PC-9 (cell line): ENCODE measurements at regions of chr2 and their contacts with region 1.

Region 1: GRCh38 chr2:174300089-174300488 is 34.7 kb upstream of the SP9 start:
- DNase-seq: no peak
- H3K4me3 ChIP-seq: no peak overlapping the region
- H3K27ac ChIP-seq: no peak overlapping the region
- H3K4me1 ChIP-seq: peaks cover 6% of the 10 kb centered on the region; the same call in 1 of the 2 replicates
- H3K27me3 ChIP-seq: no peaks in the 10 kb centered on the region
- CTCF ChIP-seq: no peak

Region 2: DNA sequence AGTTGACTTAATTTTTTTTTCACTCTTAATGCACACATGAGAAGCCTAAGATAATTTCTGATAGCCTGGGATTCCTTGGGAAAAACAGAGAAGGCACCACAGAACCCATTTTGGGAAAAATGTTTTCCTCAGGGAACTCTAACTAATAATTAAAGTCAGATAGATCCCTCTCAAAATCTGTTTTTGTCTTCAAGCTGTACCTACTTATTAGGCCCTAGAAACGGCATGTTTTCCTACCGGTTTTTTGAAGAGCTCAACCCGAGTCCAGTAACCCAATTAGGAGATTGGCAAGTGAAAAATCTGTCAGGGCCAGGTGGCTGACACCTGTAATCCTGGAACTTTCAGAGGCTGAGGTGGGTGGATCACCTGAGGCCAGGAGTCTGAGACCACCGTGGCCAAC is 1760.3 kb before region 1 on chr2:
- CTCF ChIA-PET with region 1: interaction called, 13 read pairs
- POLR2A ChIA-PET with region 1: no interaction called
- intact Hi-C with region 1: no loop called
- DNase-seq: no peak
- H3K4me3 ChIP-seq: no peak overlapping the region
- H3K27ac ChIP-seq: no peak overlapping the region
- H3K4me1 ChIP-seq: no peaks in the 10 kb centered on the region
- H3K27me3 ChIP-seq: no peaks in the 10 kb centered on the region
- CTCF ChIP-seq: no peak

Region 3: GRCh38 chr2:174072069-174072468 is 228.0 kb before region 1 on chr2:
- CTCF ChIA-PET with region 1: no interaction called
- POLR2A ChIA-PET with region 1: interaction called, 11 read pairs
- intact Hi-C with region 1: no loop called
- DNase-seq: no peak
- H3K4me3 ChIP-seq: no peak overlapping the region
- H3K27ac ChIP-seq: no peak overlapping the region
- H3K4me1 ChIP-seq: no peaks in the 10 kb centered on the region
- H3K27me3 ChIP-seq: no peaks in the 10 kb centered on the region
- CTCF ChIP-seq: no peak

Region 4: DNA sequence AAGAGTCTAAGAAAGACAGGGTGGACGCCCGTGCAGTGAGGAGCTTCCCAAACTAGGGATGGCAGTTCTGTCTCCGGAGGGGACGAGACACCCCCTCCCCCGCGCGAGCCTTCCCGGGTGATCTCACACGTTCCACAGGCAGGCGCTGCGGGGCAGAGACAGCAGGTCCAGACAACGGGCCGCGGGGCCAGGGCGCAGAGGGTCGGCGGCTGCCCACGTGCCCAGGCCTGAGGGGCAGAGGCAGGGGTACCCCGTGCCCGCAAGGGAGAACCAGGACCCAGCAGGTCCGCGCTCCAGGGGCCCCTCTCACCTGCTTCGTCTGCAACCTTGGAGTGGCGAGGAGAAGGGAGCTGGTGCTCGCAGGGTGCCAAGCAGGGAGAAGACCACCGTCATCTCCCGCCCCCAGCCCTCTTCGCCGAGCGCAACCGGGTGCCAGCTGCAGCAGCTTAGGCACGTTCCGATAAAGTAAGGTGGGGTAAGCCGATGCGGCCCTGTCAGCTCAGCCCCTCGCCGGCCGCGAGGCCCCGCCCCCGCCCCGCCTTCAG is 186.5 kb after region 1 on chr2 and contains the start of gene GPR155:
- CTCF ChIA-PET with region 1: no interaction called
- POLR2A ChIA-PET with region 1: no interaction called
- intact Hi-C with region 1: no loop called
- DNase-seq: no peak
- H3K4me3 ChIP-seq: peak within 1 kb of the TSS; percentile 94
- H3K27ac ChIP-seq: peak within 1 kb of the TSS; percentile 45
- H3K4me1 ChIP-seq: peaks cover 12% of the 10 kb centered on the region
- H3K27me3 ChIP-seq: no peaks in the 10 kb centered on the region
- CTCF ChIP-seq: no peak
- total RNA-seq, gene GPR155: 0.18 and 0.79 TPM in 2 replicates